ENCODE measurements at regions of chr6 and their contacts with region 1.

Region 1: GRCh38 chr6:35731736-35732532 is 4.9 kb upstream of the ARMC12 start:
- DNase-seq: peak; percentile 88 to 97 (median 92)
- H3K4me3 ChIP-seq: peak overlapping the region; percentile 80
- H3K4me3 Mint-ChIP-seq: peak overlapping the region; percentile 84 to 94 (median 88)
- H3K27ac ChIP-seq: peak overlapping the region; percentile 87
- H3K27ac Mint-ChIP-seq: peak overlapping the region; percentile 88 to 98 (median 96)
- H3K4me1 ChIP-seq: peaks cover 82% of the 10 kb centered on the region
- H3K4me1 Mint-ChIP-seq: peaks cover 66 to 91% (median 74%) of the 10 kb centered on the region in 3 donors
- H3K27me3 ChIP-seq: no peaks in the 10 kb centered on the region
- H3K27me3 Mint-ChIP-seq: peaks cover 0 to 4% of the 10 kb centered on the region in 2 donors

Region 2: DNA sequence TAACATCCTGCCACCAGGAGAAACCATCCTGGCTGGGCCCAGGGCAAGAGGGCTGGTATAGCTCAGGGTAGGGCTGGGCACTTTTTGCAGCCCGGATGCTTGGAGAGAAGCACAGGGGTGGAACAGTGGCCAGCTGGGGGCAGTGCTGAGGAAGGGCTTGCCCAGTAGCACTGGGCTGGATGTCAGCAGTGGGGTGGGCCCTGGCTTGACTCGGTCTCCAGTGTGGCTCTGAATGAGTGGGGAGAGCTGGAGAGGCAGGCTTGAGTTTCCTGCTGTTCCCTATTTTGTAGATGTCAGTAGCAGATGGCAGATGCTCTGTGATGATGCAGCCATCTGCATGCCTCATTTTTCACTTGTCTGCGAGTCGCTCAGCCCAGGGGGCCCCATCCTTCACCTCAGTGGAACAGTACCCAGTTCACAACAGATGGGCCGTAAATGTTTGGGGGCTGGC is 162.9 kb before region 1 on chr6:
- CTCF ChIA-PET with region 1: interaction called, 13 read pairs
- POLR2A ChIA-PET with region 1: no interaction called
- DNase-seq: peak in 1 of 5 donors; percentile 50
- H3K4me3 ChIP-seq: no peak overlapping the region
- H3K4me3 Mint-ChIP-seq: no peak overlapping the region
- H3K27ac ChIP-seq: no peak overlapping the region
- H3K27ac Mint-ChIP-seq: peak overlapping the region in 2 of 8 donors; percentile 47 to 75
- H3K4me1 ChIP-seq: no peaks in the 10 kb centered on the region
- H3K4me1 Mint-ChIP-seq: peaks cover 0 to 3% (median 0%) of the 10 kb centered on the region in 3 donors
- H3K27me3 ChIP-seq: no peaks in the 10 kb centered on the region
- H3K27me3 Mint-ChIP-seq: peaks cover 9 to 10% of the 10 kb centered on the region in 2 donors

Region 3: DNA sequence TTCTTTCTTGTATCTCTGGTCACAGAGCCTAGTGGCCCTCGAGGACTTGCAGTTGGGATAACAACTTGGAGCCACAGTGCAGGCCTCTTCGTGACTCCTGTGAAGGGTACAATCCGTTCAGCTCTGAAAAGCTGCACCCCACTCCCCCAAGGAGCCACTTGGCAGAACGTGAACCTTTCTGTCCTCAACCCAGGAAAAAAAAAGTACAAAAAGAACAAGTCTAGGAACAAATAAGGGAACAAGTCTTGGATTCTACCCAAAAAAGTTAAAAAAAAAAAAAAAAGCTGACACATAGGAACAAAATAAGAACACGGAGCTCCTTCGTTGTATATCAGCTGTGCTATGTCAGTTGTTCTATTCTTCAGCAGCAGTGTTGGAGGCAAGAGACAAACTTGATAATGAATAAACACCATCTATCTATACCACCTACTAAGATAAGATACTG is 141.3 kb before region 1 on chr6:
- CTCF ChIA-PET with region 1: interaction called, 59 read pairs
- POLR2A ChIA-PET with region 1: interaction called, 5 read pairs
- DNase-seq: no peak
- H3K4me3 ChIP-seq: no peak overlapping the region
- H3K4me3 Mint-ChIP-seq: peak overlapping the region in 1 of 7 donors; percentile 44
- H3K27ac ChIP-seq: no peak overlapping the region
- H3K27ac Mint-ChIP-seq: peak overlapping the region in 7 of 8 donors; percentile 47 to 85 (median 68)
- H3K4me1 ChIP-seq: peaks cover 93% of the 10 kb centered on the region
- H3K4me1 Mint-ChIP-seq: peaks cover 68 to 92% (median 82%) of the 10 kb centered on the region in 3 donors
- H3K27me3 ChIP-seq: no peaks in the 10 kb centered on the region
- H3K27me3 Mint-ChIP-seq: no peaks in the 10 kb centered on the region

Region 4: DNA sequence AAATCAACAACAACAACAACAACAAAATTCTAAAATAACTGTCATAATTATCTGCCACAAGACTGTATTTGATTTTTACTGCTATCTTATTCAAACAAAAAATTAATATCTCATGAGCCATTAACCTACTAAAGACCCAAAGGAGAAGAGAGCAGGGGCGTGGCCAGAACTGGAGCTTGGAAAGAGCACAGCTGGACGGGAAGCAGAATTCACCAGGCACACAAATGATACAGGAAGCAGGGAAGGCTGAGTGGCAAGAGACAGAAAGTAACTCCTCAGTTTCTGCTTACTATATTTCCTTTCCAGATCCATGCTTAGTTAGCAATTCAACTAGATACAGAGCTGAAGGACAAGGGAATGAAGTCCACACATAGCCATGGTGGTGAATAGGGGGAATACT is 97.6 kb before region 1 on chr6:
- CTCF ChIA-PET with region 1: interaction called, 15 read pairs
- POLR2A ChIA-PET with region 1: interaction called, 8 read pairs
- DNase-seq: no peak
- H3K4me3 ChIP-seq: no peak overlapping the region
- H3K4me3 Mint-ChIP-seq: no peak overlapping the region
- H3K27ac ChIP-seq: no peak overlapping the region
- H3K27ac Mint-ChIP-seq: peak overlapping the region; percentile 8 to 72 (median 38)
- H3K4me1 ChIP-seq: peaks cover 25% of the 10 kb centered on the region
- H3K4me1 Mint-ChIP-seq: peaks cover 14 to 30% (median 22%) of the 10 kb centered on the region in 3 donors
- H3K27me3 ChIP-seq: no peaks in the 10 kb centered on the region
- H3K27me3 Mint-ChIP-seq: no peaks in the 10 kb centered on the region

Region 5: DNA sequence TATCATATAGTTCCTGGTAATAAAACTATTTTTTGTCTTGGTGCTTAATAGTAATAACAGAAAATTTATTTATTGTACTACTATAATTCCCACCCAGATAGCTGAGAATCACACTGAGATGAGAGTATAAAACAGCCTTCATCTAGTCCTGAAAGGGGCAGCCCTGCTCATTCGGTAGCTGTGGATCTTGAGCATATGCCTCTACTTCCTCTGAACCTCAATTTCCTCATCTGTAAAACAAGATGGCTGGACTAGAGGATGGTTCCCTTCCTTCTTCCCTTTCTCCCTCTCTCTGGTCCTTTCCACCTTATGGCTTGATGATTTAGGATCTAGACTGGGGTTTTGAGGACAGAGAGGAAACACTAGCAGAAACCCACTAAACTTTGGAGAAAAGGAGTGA is 58.2 kb before region 1 on chr6:
- CTCF ChIA-PET with region 1: interaction called, 10 read pairs
- POLR2A ChIA-PET with region 1: no interaction called
- DNase-seq: no peak
- H3K4me3 ChIP-seq: no peak overlapping the region
- H3K4me3 Mint-ChIP-seq: peak overlapping the region in 3 of 7 donors; percentile 12 to 36 (median 24)
- H3K27ac ChIP-seq: no peak overlapping the region
- H3K27ac Mint-ChIP-seq: peak overlapping the region; percentile 33 to 90 (median 68)
- H3K4me1 ChIP-seq: peaks cover 81% of the 10 kb centered on the region
- H3K4me1 Mint-ChIP-seq: peaks cover 67 to 91% (median 90%) of the 10 kb centered on the region in 3 donors
- H3K27me3 ChIP-seq: no peaks in the 10 kb centered on the region
- H3K27me3 Mint-ChIP-seq: no peaks in the 10 kb centered on the region

Region 6: GRCh38 chr6:36052097-36052496 is 320.2 kb after region 1 on chr6:
- CTCF ChIA-PET with region 1: no interaction called
- POLR2A ChIA-PET with region 1: no interaction called
- DNase-seq: no peak
- H3K4me3 ChIP-seq: no peak overlapping the region
- H3K4me3 Mint-ChIP-seq: no peak overlapping the region
- H3K27ac ChIP-seq: no peak overlapping the region
- H3K27ac Mint-ChIP-seq: no peak overlapping the region
- H3K4me1 ChIP-seq: peaks cover 30% of the 10 kb centered on the region
- H3K4me1 Mint-ChIP-seq: peaks cover 15 to 30% (median 18%) of the 10 kb centered on the region in 3 donors
- H3K27me3 ChIP-seq: no peaks in the 10 kb centered on the region
- H3K27me3 Mint-ChIP-seq: no peaks in the 10 kb centered on the region

Measured in CD8-positive, alpha-beta memory T cell (primary cell).